Esophagus muscularis mucosa (tissue), 4 donors: ENCODE measurements at regions of chr5 and their contacts with region 1.

Region 1: GRCh38 chr5:72366324-72366976 is 46.3 kb downstream of the PTCD2 start:
- DNase-seq: peak; percentile 94
- H3K4me3 ChIP-seq: no peak overlapping the region
- H3K27ac ChIP-seq: no peak overlapping the region
- H3K4me1 ChIP-seq: peaks cover 7 to 33% (median 27%) of the 10 kb centered on the region in 4 donors
- H3K27me3 ChIP-seq: no peaks in the 10 kb centered on the region
- CTCF ChIP-seq: peak; percentile 77 to 90 (median 82)
- EP300 ChIP-seq: no peak
- POLR2A ChIP-seq: no peak

Region 2: DNA sequence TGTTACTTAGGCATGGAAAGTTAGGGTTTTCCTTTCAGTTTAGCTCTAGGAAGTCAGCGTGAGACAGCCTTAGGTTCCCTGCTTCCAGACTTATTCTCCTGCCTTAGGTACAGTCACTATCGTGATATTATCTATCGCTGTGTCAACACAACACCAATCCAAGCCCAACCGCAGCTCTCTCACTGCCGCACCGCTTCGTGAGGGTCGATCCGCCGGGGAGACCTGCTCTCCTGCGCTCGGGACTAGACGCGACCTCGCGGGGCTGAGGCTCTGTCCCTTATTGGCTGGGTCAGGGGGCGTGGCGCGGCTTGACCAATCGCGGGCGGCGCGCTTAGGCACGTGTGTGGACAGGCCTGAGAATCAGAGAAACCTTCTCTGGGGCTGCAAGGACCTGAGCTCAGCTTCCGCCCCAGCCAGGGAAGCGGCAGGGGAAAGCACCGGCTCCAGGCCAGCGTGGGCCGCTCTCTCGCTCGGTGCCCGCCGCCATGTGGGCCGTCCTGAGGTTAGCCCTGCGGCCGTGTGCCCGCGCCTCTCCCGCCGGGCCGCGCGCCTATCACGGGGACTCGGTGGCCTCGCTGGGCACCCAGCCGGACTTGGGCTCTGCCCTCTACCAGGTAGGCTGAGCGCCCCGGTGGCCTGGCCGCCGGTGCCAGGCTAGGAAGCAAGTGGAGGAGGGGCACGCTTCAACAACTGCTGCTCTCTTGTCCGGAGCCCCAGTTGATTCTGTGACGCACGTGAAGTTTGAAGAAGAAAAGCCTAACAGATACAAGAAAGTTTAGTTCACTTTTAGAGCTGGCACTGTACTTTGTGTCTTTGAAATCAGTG is 779.3 kb before region 1 on chr5 and contains the start of gene MCCC2:
- intact Hi-C with region 1: no loop called
- DNase-seq: peak; percentile 99
- H3K4me3 ChIP-seq: peak within 1 kb of the TSS; percentile 71 to 85 (median 79)
- H3K27ac ChIP-seq: peak within 1 kb of the TSS; percentile 81 to 89 (median 82)
- H3K4me1 ChIP-seq: peaks cover 17 to 38% (median 26%) of the 10 kb centered on the region in 4 donors
- H3K27me3 ChIP-seq: no peaks in the 10 kb centered on the region
- CTCF ChIP-seq: peak in 1 of 3 experiments; percentile 10
- EP300 ChIP-seq: no peak
- POLR2A ChIP-seq: no peak
- total RNA-seq, gene MCCC2: 17.7 to 24.2 (median 23.7) TPM

Region 3: GRCh38 chr5:72210888-72211678 is 155.4 kb before region 1 on chr5:
- intact Hi-C with region 1: no loop called
- DNase-seq: no peak
- H3K4me3 ChIP-seq: no peak overlapping the region
- H3K27ac ChIP-seq: peak overlapping the region; percentile 61 to 74 (median 68)
- H3K4me1 ChIP-seq: peaks cover 15 to 18% (median 16%) of the 10 kb centered on the region in 4 donors
- H3K27me3 ChIP-seq: no peaks in the 10 kb centered on the region
- CTCF ChIP-seq: no peak
- EP300 ChIP-seq: no peak
- POLR2A ChIP-seq: no peak

Region 4: GRCh38 chr5:72451741-72452505 is 85.5 kb after region 1 on chr5:
- intact Hi-C with region 1: loop called (anchors 5 kb)
- DNase-seq: peak; percentile 95
- H3K4me3 ChIP-seq: peak overlapping the region in 1 of 4 donors; percentile 10
- H3K27ac ChIP-seq: peak overlapping the region; percentile 82 to 92 (median 86)
- H3K4me1 ChIP-seq: peaks cover 47 to 57% (median 52%) of the 10 kb centered on the region in 4 donors
- H3K27me3 ChIP-seq: no peaks in the 10 kb centered on the region
- CTCF ChIP-seq: no peak
- EP300 ChIP-seq: no peak
- POLR2A ChIP-seq: no peak

Region 5: DNA sequence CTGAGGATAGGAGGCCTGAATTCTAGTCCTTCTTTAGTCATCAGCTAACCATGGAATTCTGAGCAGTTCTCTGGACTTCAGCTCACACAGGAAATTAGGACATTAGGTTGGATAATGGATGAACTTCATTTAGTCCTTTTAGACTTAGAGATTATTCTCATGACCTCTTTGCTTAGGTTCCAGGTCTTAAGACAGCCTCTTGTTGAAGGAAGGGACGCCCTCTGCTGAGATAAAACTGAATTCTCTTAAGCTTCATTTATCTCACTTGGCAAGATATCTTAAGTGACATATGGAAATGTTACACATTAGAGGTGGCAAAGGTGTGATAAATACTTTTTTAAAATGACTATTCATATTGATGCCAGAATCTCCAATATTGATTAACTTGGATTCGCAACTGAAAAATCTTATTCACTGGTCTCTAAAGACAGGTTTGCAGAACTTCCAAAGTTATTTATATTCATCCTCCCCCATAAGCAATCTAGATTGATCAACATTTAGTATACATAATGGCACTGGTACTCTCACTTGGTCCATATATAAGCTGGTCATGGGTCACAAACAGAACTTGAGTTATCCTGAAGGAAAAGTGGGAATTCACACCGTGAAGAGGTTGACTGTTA is 157.6 kb after region 1 on chr5:
- intact Hi-C with region 1: loop called (anchors 1 kb)
- DNase-seq: no peak
- H3K4me3 ChIP-seq: no peak overlapping the region
- H3K27ac ChIP-seq: no peak overlapping the region
- H3K4me1 ChIP-seq: peaks cover 0 to 5% (median 2%) of the 10 kb centered on the region in 4 donors
- H3K27me3 ChIP-seq: no peaks in the 10 kb centered on the region
- CTCF ChIP-seq: peak; percentile 56 to 65 (median 62)
- EP300 ChIP-seq: no peak
- POLR2A ChIP-seq: no peak

Region 6: DNA sequence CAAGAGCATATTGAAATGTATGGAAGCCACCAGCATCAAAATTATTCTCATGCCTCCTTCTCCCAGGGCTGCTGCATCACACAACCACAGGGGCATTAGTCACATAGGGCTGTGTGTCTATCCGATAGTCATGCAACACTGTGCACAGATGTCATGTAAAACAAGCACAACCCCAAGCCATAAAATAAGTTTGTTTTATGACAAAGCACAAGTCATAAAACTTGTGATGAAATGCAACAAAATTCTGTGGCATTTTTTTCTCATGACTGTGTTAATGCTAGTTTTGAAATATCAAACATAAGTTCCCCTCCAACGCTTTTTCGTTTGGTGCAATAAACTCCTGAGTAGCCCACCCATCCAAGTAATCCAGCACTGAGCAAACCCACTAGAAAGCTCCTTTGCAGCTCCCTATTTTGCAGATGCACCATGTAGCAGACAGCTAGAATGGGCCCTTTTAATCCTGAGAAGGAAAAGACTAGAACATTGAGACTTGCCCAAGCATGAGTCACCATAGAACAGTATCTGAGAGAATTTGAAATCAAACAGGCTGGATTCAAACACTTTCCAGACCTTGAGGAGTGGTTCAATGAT is 234.0 kb after region 1 on chr5:
- intact Hi-C with region 1: loop called (anchors 10 kb)
- DNase-seq: no peak
- H3K4me3 ChIP-seq: no peak overlapping the region
- H3K27ac ChIP-seq: peak overlapping the region in 1 of 4 donors; percentile 11
- H3K4me1 ChIP-seq: peaks cover 15 to 24% (median 19%) of the 10 kb centered on the region in 4 donors
- H3K27me3 ChIP-seq: no peaks in the 10 kb centered on the region
- CTCF ChIP-seq: no peak
- EP300 ChIP-seq: no peak
- POLR2A ChIP-seq: no peak

Region 7: GRCh38 chr5:72816311-72817145 is 450.1 kb after region 1 on chr5 and contains the start of gene TNPO1:
- intact Hi-C with region 1: loop called (anchors 5 kb)
- DNase-seq: peak; percentile 97
- H3K4me3 ChIP-seq: peak within 1 kb of the TSS; percentile 71 to 91 (median 84)
- H3K27ac ChIP-seq: peak within 1 kb of the TSS; percentile 94 to 99 (median 98)
- H3K4me1 ChIP-seq: peaks cover 11 to 33% (median 31%) of the 10 kb centered on the region in 4 donors
- H3K27me3 ChIP-seq: no peaks in the 10 kb centered on the region
- CTCF ChIP-seq: no peak
- EP300 ChIP-seq: no peak
- POLR2A ChIP-seq: peak; percentile 84
- total RNA-seq, gene TNPO1: 67.8 to 81.8 (median 71.3) TPM

Region 8: GRCh38 chr5:72847989-72848473 is 481.6 kb after region 1 on chr5:
- intact Hi-C with region 1: loop called (anchors 10 kb)
- DNase-seq: peak; percentile 94
- H3K4me3 ChIP-seq: peak overlapping the region; percentile 71 to 90 (median 84)
- H3K27ac ChIP-seq: peak overlapping the region; percentile 83 to 96 (median 88)
- H3K4me1 ChIP-seq: peaks cover 42 to 81% (median 64%) of the 10 kb centered on the region in 4 donors
- H3K27me3 ChIP-seq: no peaks in the 10 kb centered on the region
- CTCF ChIP-seq: peak in 1 of 3 experiments; percentile 25
- EP300 ChIP-seq: no peak
- POLR2A ChIP-seq: peak; percentile 81